Ascending aorta (tissue), 2 donors: ENCODE measurements at regions of chrX and their contacts with region 1.

Region 1: GRCh38 chrX:48475774-48476577 is at the start of gene FTSJ1:
- DNase-seq: peak; percentile 76 to 94
- H3K4me3 ChIP-seq: peak within 1 kb of the TSS; percentile 66 to 70
- H3K27ac ChIP-seq: peak within 1 kb of the TSS; percentile 80 to 88
- H3K4me1 ChIP-seq: no peaks in the 10 kb centered on the region
- H3K27me3 ChIP-seq: no peaks in the 10 kb centered on the region
- CTCF ChIP-seq: no peak
- total RNA-seq, gene FTSJ1: 159 TPM

Region 2: GRCh38 chrX:47233337-47234113 is 1242.5 kb before region 1 on chrX:
- intact Hi-C with region 1: loop called (anchors 5 kb)
- DNase-seq: peak; percentile 96 to 97
- H3K4me3 ChIP-seq: peak overlapping the region; percentile 56 to 88
- H3K27ac ChIP-seq: peak overlapping the region; percentile 89 to 98
- H3K4me1 ChIP-seq: peaks cover 0 to 3% of the 10 kb centered on the region in 2 donors
- H3K27me3 ChIP-seq: no peaks in the 10 kb centered on the region
- CTCF ChIP-seq: no peak

Region 3: GRCh38 chrX:48451708-48452107 is 24.3 kb before region 1 on chrX:
- intact Hi-C with region 1: no loop called
- DNase-seq: no peak
- H3K4me3 ChIP-seq: no peak overlapping the region
- H3K27ac ChIP-seq: no peak overlapping the region
- H3K4me1 ChIP-seq: no peaks in the 10 kb centered on the region
- H3K27me3 ChIP-seq: no peaks in the 10 kb centered on the region
- CTCF ChIP-seq: no peak

Region 4: GRCh38 chrX:48508400-48509244 is 32.6 kb after region 1 on chrX and contains the start of gene PORCN:
- intact Hi-C with region 1: loop called (anchors 2 kb)
- DNase-seq: peak; percentile 28 to 86
- H3K4me3 ChIP-seq: peak within 1 kb of the TSS; percentile 63 to 69
- H3K27ac ChIP-seq: peak within 1 kb of the TSS; percentile 51 to 72
- H3K4me1 ChIP-seq: peaks cover 0 to 3% of the 10 kb centered on the region in 2 donors
- H3K27me3 ChIP-seq: no peaks in the 10 kb centered on the region
- CTCF ChIP-seq: no peak
- total RNA-seq, gene PORCN: 6.2 TPM

Region 5: DNA sequence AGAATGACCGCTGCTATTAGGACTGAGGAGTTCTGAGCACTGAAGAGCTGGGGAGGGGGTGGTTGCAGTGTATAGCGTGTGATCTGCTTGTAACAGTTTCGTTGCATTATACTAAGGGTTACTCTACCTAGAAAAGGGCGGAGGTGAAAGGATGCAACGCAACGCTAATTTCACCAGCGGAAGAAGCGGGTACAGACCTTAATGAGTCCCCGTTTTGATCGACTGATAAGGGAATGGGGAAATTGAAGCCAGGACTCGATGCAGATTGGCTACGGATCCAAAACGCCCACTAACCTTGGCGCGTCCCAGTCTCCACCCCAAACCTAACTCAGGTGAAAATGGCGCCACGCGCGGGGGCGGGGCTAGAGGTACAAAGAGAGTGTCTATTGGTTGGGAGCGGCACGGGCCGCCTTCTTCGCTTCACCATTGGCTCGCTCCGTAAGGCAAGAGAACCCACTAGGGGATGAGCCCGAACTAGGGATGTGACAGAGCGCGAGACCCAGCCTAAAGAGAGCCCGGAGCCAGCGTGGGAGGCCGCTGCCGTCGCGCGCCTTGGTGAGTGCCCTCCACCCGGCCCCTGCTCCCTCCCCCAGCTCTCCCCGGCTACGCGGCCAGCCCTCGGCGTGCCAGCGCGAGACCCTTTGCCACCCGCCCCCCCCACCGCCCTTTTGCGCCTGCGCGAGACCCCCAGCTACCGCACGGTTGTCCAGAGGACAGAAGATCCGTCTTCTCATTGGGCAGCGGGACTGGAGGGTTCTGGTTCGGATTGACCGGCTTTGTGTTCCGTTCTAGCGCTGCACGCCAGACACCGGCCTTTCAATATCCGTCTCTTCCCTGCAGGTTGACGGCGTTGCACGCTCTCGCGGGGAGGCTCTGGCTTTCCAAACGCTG is 45.6 kb after region 1 on chrX and contains the start of gene EBP:
- intact Hi-C with region 1: loop called (anchors 5 kb)
- DNase-seq: peak; percentile 69 to 93
- H3K4me3 ChIP-seq: peak within 1 kb of the TSS; percentile 56 to 79
- H3K27ac ChIP-seq: peak within 1 kb of the TSS; percentile 59 to 69
- H3K4me1 ChIP-seq: no peaks in the 10 kb centered on the region
- H3K27me3 ChIP-seq: no peaks in the 10 kb centered on the region
- CTCF ChIP-seq: no peak
- total RNA-seq, gene EBP: 76.2 TPM

Region 6: DNA sequence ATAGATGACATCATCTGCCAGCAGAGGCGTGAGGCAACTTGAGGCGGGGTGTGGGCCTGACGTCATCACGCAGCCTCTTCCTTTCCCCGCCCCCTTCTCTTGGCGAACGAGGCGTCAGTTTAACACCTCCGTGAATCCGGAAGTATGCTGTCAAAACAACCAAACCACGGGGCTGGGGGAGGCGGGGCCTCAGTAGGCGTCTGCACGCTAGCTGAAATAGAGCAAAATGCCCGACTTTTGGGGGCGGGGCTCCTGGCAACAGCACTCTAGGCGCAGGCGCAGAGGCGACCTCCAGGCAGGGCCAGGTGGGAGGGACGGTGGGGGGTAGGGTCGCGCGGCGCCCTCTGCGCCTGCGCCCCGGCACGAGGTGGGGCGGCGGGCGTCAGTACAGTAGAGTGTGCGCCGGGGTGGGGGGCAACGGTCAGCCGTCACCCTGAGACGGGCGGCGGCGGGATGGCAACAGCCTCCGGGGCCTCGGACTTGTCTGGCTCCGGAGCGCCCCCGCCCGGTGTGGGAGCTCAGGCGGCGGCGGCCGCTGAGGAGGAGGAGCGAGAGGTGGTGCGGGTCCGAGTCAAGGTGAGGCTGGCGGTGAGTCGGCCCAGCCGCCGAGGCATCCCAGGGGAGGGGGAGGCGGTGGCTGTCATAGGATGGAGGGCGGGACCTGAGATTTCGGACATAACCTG is 63.5 kb after region 1 on chrX and contains the start of gene TBC1D25:
- intact Hi-C with region 1: loop called (anchors 1 kb)
- DNase-seq: peak; percentile 93 to 98
- H3K4me3 ChIP-seq: peak within 1 kb of the TSS; percentile 53 to 78
- H3K27ac ChIP-seq: peak within 1 kb of the TSS; percentile 79 to 87
- H3K4me1 ChIP-seq: no peaks in the 10 kb centered on the region
- H3K27me3 ChIP-seq: no peaks in the 10 kb centered on the region
- CTCF ChIP-seq: peak; percentile 20 to 55 (median 43)
- total RNA-seq, gene TBC1D25: 8.2 TPM

Region 7: GRCh38 chrX:48574270-48575266 is 98.6 kb after region 1 on chrX and contains the start of gene RBM3:
- intact Hi-C with region 1: loop called (anchors 1 kb)
- DNase-seq: peak; percentile 77 to 95
- H3K4me3 ChIP-seq: peak within 1 kb of the TSS; percentile 71 to 78
- H3K27ac ChIP-seq: peak within 1 kb of the TSS; percentile 96 to 99
- H3K4me1 ChIP-seq: peaks cover 0 to 7% of the 10 kb centered on the region in 2 donors
- H3K27me3 ChIP-seq: no peaks in the 10 kb centered on the region
- CTCF ChIP-seq: peak in 2 of 3 experiments; percentile 30 to 36
- total RNA-seq, gene RBM3: 119 TPM

Region 8: GRCh38 chrX:48897621-48898306 is 421.8 kb after region 1 on chrX and contains the starts of genes PQBP1 and TIMM17B:
- intact Hi-C with region 1: loop called (anchors 10 kb)
- DNase-seq: peak; percentile 72 to 93
- H3K4me3 ChIP-seq: peak within 1 kb of the TSS; percentile 60 to 69
- H3K27ac ChIP-seq: peak within 1 kb of the TSS; percentile 94 to 97
- H3K4me1 ChIP-seq: peaks cover 3 to 9% of the 10 kb centered on the region in 2 donors
- H3K27me3 ChIP-seq: no peaks in the 10 kb centered on the region
- CTCF ChIP-seq: no peak
- total RNA-seq, gene PQBP1: 14.8 TPM
- total RNA-seq, gene TIMM17B: 15.3 TPM